MCF 10A (cell line): ENCODE measurements at regions of chr1 and their contacts with region 1.

Region 1: GRCh38 chr1:65687428-65688214 is 105.1 kb upstream of the PDE4B start:
- DNase-seq: peak; percentile 81
- H3K4me3 Mint-ChIP-seq: no peak overlapping the region
- H3K27ac Mint-ChIP-seq: no peak overlapping the region
- H3K4me1 Mint-ChIP-seq: no peaks in the 10 kb centered on the region
- H3K27me3 Mint-ChIP-seq: no peaks in the 10 kb centered on the region
- CTCF ChIP-seq: peak; percentile 92

Region 2: GRCh38 chr1:65059930-65060538 is 627.6 kb before region 1 on chr1:
- CTCF ChIA-PET with region 1: interaction called, 20 read pairs
- POLR2A ChIA-PET with region 1: no interaction called
- intact Hi-C with region 1: loop called (anchors 1 kb)
- DNase-seq: peak; percentile 54
- H3K4me3 Mint-ChIP-seq: no peak overlapping the region
- H3K27ac Mint-ChIP-seq: no peak overlapping the region
- H3K4me1 Mint-ChIP-seq: peaks cover 27% of the 10 kb centered on the region
- H3K27me3 Mint-ChIP-seq: no peaks in the 10 kb centered on the region
- CTCF ChIP-seq: peak; percentile 63

Region 3: DNA sequence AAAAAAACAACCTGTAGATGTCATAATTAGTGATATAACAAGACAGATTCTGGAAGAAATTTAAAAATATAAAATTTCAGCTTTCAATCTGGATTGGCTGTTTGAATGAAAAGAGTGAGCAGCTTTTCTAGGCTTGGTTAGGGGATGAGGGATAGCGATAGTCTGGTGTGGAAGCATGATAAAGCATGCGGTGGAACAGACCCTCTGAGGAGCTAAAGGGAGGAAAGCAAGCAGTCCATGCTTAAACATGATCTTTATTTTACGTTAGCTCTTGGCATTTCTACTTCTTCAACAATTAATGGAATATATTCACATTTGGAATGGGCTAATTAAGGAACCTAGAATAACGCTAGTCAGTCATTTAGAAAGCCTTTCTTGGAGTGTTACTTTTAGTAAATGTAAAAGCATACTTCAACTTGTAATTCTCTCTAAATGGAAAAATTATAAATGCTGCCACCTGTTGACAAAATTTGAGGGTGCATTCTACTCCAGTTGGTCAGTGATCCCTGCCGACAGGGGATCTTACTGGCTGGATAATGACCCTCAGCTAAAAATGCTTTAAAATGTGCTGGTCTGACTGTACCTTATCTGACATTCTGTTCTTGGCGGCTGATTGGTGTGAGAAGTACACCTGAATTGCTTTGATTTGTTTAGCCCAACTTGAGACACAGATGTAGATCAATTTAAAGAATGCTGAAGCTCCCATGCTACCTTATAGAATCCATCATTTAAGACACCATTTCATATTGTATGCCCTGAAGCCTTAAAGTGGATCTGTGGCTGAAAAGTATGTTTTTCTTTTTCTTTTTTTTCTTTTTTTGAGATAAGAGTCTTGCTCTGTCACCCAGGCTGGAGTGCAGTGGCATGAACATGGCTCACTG is 478.4 kb before region 1 on chr1:
- CTCF ChIA-PET with region 1: interaction called, 47 read pairs
- POLR2A ChIA-PET with region 1: no interaction called
- intact Hi-C with region 1: no loop called
- DNase-seq: peak; percentile 61
- H3K4me3 Mint-ChIP-seq: no peak overlapping the region
- H3K27ac Mint-ChIP-seq: no peak overlapping the region
- H3K4me1 Mint-ChIP-seq: no peaks in the 10 kb centered on the region
- H3K27me3 Mint-ChIP-seq: no peaks in the 10 kb centered on the region
- CTCF ChIP-seq: peak; percentile 56

Region 4: GRCh38 chr1:65254319-65255034 is 433.1 kb before region 1 on chr1:
- CTCF ChIA-PET with region 1: interaction called, 26 read pairs
- POLR2A ChIA-PET with region 1: interaction called, 3 read pairs
- intact Hi-C with region 1: no loop called
- DNase-seq: peak; percentile 74
- H3K4me3 Mint-ChIP-seq: peak overlapping the region; percentile 74
- H3K27ac Mint-ChIP-seq: peak overlapping the region; percentile 7
- H3K4me1 Mint-ChIP-seq: peaks cover 18% of the 10 kb centered on the region
- H3K27me3 Mint-ChIP-seq: no peaks in the 10 kb centered on the region
- CTCF ChIP-seq: no peak

Region 5: DNA sequence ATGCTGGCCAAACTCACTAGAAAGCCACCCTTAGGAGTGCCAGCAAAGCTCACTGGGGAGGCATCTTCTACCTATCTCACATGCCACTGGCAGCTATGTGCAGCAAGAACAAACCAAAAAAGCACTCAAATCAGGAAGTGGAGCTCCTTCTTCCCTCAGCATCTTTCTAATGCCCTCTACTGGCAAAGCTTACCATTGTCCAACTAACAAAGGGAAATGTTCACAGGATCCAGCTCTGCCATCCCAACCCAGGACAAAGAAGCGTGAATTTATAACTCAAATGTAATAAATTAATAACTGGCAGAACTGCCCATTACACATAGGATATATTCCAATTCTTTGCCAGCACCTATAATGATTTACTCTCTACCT is 228.2 kb before region 1 on chr1:
- CTCF ChIA-PET with region 1: interaction called, 18 read pairs
- POLR2A ChIA-PET with region 1: no interaction called
- intact Hi-C with region 1: no loop called
- DNase-seq: peak; percentile 57
- H3K4me3 Mint-ChIP-seq: no peak overlapping the region
- H3K27ac Mint-ChIP-seq: peak overlapping the region; percentile 31
- H3K4me1 Mint-ChIP-seq: peaks cover 16% of the 10 kb centered on the region
- H3K27me3 Mint-ChIP-seq: no peaks in the 10 kb centered on the region
- CTCF ChIP-seq: peak; percentile 54

Region 6: DNA sequence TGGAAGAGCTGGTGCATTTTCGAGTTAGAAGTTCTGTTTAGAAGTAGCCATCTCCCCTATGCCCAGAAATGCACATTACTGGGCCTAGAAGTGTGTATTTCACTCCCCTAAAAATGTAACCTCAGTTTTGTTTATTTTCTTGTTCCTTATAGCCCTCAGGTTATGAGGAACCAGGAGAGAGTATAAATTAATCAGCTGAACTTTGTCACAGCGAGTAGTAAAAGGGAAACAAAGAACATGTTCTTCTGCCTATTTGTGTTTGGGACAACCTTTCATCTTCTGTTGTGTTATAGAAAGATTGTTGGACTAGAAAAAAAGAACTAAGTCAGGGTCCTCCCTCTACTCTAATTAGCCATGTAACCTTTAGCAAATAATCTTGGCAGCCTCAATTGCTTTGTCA is 55.4 kb before region 1 on chr1:
- CTCF ChIA-PET with region 1: no interaction called
- POLR2A ChIA-PET with region 1: no interaction called
- intact Hi-C with region 1: no loop called
- DNase-seq: no peak
- H3K4me3 Mint-ChIP-seq: no peak overlapping the region
- H3K27ac Mint-ChIP-seq: no peak overlapping the region
- H3K4me1 Mint-ChIP-seq: peaks cover 14% of the 10 kb centered on the region
- H3K27me3 Mint-ChIP-seq: no peaks in the 10 kb centered on the region
- CTCF ChIP-seq: no peak

Region 7: DNA sequence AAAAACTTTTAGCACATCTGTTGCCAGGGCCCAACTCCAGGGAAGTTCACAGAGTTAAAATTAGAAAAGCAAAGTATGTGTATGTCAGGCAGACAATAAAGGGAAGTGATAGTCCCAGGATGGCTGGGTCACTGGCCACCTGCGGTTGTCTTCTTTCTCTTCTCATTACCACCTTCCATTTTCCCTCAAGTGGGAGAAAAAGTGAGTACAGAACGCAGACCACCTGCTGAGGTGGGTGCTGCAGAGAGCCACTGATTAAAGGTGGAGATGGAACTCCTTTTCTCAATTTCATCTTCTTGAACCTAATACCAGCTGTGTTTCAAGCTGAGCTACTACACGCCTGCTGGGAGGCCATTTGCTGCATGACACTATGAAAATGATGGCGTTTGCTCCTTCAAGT is 16.2 kb after region 1 on chr1:
- CTCF ChIA-PET with region 1: interaction called, 11 read pairs
- POLR2A ChIA-PET with region 1: no interaction called
- intact Hi-C with region 1: no loop called
- DNase-seq: no peak
- H3K4me3 Mint-ChIP-seq: no peak overlapping the region
- H3K27ac Mint-ChIP-seq: no peak overlapping the region
- H3K4me1 Mint-ChIP-seq: no peaks in the 10 kb centered on the region
- H3K27me3 Mint-ChIP-seq: peaks cover 80% of the 10 kb centered on the region
- CTCF ChIP-seq: no peak

Region 8: GRCh38 chr1:65881067-65881594 is 193.5 kb after region 1 on chr1:
- CTCF ChIA-PET with region 1: no interaction called
- POLR2A ChIA-PET with region 1: no interaction called
- intact Hi-C with region 1: no loop called
- DNase-seq: no peak
- H3K4me3 Mint-ChIP-seq: no peak overlapping the region
- H3K27ac Mint-ChIP-seq: no peak overlapping the region
- H3K4me1 Mint-ChIP-seq: no peaks in the 10 kb centered on the region
- H3K27me3 Mint-ChIP-seq: no peaks in the 10 kb centered on the region
- CTCF ChIP-seq: no peak